Activated T-helper 1 cell treated with anti-CD3 and anti-CD28 coated beads, Interleukin-12 subunit alpha, Interleukin-12 subunit beta, Interleukin-2, Interleukin-4 antibody, amounts not matched to agents 30 ng/mL and 10 ng/mL and 1 ng/mL, durations not matched to agents 14 hours and 24 hours and 36 hours (primary cell): ENCODE measurements at regions of chr4 and their contacts with region 1.

Region 1: GRCh38 chr4:53196882-53197771 is 168.7 kb downstream of the SCFD2 start:
- DNase-seq: no peak
- H3K4me3 Mint-ChIP-seq: no peak overlapping the region
- H3K27ac Mint-ChIP-seq: no peak overlapping the region
- H3K4me1 Mint-ChIP-seq: peaks cover 4% of the 10 kb centered on the region
- H3K27me3 Mint-ChIP-seq: no peaks in the 10 kb centered on the region

Region 2: DNA sequence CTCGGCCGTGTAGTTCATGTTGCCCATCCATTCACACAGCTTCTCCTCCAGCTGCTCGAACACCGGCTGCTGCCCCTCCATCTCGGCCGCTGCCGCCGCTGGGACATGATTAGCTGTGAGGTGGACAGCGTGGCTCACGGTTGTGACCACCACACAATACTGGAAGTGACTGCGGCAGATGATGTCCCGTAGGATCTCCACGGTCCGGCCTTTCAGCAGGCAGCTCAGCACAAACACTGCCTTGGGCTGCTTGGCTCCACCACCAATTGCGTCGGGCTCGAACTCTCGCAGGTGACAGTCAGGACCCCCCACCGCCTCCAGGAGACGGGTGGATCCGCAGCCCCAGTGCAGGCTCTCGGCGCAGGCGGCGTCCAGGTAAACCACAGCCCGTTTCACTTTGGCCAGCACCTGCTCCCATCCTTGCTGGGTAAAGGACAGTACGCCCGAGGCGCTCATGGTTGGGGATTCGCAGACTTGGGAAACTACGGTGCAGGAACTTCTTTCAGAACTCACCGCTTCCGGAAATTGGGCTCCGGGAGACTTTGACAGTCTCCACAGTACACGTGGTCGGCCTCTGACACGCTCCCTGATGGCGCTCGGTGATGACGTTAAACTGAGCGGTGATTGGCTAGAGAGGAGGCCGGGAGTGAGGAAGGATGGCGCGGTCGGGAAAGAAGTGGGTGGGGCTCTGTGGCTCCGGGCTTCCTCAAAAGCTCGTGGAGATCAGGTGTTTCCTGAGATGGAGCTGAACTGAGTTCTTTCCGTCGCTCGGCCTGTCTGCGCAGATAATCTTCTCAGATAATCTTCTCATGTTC is 168.6 kb after region 1 on chr4 and contains the start of gene SCFD2:
- intact Hi-C with region 1: loop called (anchors 1 kb)
- DNase-seq: peak; percentile 95
- H3K4me3 Mint-ChIP-seq: peak within 1 kb of the TSS; percentile 98
- H3K27ac Mint-ChIP-seq: peak within 1 kb of the TSS; percentile 88
- H3K4me1 Mint-ChIP-seq: peaks cover 39% of the 10 kb centered on the region
- H3K27me3 Mint-ChIP-seq: peaks cover 5% of the 10 kb centered on the region
- total RNA-seq, gene SCFD2: 39.4 and 40.5 TPM in 2 replicates

Region 3: DNA sequence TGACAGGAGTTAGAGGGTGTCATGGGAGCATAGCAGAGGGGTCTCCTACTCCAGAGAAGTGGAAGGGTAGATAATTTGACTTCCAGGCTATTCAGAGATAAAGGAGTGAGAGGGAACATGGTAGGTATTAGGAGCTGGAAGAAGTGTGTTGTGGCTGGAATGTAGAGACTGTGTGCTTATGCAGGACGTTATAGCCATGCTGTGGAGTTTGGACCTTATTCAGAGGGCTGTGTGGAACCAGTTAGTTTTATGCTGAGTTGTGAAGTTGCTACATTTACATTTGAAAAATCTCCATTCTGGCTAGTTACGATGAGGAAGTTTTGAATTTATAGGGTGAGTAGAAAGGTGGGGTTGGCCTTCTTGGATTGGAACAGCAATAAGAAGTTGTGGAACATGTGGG is 247.8 kb after region 1 on chr4:
- intact Hi-C with region 1: loop called (anchors 10 kb)
- DNase-seq: no peak
- H3K4me3 Mint-ChIP-seq: no peak overlapping the region
- H3K27ac Mint-ChIP-seq: no peak overlapping the region
- H3K4me1 Mint-ChIP-seq: no peaks in the 10 kb centered on the region
- H3K27me3 Mint-ChIP-seq: no peaks in the 10 kb centered on the region

Region 4: GRCh38 chr4:53908661-53909078 is 711.5 kb after region 1 on chr4:
- intact Hi-C with region 1: loop called (anchors 5 kb)
- DNase-seq: no peak
- H3K4me3 Mint-ChIP-seq: no peak overlapping the region
- H3K27ac Mint-ChIP-seq: no peak overlapping the region
- H3K4me1 Mint-ChIP-seq: peaks cover 17% of the 10 kb centered on the region
- H3K27me3 Mint-ChIP-seq: peaks cover 30% of the 10 kb centered on the region

Region 5: DNA sequence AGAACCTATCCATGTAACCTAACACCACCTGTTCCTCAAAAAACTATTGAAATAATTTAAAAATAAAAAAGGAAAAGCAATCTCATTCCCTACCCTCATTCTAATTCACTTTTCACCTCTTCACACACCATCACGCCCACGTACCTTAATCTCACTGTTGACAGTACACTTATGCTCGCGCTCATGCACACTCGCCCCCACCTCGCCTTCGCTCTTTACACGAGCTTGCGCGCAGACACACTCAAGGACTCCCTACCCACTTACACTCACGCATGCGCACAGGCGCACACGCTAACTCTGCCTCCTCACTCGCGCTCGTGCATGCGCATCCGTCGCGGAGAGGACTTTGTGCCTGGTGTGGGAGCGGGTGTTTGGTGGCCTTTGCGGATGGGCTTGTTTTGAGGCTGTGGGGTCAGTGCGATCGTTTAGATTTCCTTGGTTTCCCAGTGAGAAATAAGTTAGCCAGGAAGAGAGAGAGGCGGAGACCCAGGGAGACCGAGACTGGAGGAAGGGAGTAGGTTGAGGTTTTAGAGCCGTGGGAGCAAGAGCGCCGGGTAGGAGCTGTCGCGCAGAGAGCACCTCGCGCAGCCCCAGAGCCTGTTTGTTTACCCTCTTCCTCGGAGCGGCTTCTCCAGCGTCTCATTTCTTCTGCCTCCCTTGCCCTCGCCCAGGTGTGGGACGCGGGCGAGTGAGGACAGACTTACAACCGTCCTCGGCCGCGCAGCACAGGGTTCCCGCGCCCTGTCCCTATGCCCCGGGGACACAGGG is 894.7 kb after region 1 on chr4:
- intact Hi-C with region 1: loop called (anchors 10 kb)
- DNase-seq: peak; percentile 71
- H3K4me3 Mint-ChIP-seq: peak overlapping the region; percentile 82
- H3K27ac Mint-ChIP-seq: peak overlapping the region; percentile 30
- H3K4me1 Mint-ChIP-seq: peaks cover 30% of the 10 kb centered on the region
- H3K27me3 Mint-ChIP-seq: peaks cover 74% of the 10 kb centered on the region

Region 6: DNA sequence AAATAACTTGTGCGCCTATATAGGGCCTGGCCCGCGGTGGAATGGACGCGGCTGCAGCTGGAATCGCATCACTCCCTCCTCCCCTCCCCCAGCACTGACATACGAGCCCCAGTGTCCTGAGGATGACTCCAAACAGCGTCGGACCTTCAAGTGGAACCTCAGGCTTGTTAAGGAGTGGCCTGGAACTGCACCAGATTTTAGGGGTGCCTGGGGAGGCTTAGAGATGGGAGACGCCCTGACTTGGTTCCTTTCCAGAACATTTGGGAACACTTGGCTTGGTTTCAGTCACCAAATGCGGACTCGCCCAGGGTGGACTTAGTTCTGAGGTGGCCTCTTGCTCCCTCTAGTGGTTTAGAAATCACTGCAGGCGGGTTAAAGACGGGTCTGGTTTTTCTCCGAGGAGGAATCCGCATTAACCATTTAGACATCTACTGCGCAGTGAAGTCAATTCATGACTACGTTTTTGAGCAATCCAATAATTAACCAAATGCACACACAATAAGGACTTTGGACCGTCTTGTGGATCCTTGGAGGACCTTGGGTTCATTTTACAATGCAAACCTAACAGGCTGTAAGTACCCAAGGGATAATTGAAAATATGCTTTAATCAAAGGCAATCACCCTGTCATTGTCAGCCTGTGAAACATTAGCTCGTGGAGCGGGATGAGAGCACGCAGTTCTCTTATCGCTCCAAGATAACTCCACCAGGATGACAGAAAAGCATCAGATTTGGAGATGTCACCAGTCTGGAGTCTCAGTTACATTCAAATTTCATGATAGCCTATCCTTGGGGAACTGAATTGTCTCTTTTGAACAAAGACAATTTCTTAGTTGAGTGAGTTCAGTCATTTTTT is 1020.7 kb after region 1 on chr4:
- intact Hi-C with region 1: loop called (anchors 1 kb)
- DNase-seq: peak; percentile 19
- H3K4me3 Mint-ChIP-seq: no peak overlapping the region
- H3K27ac Mint-ChIP-seq: no peak overlapping the region
- H3K4me1 Mint-ChIP-seq: peaks cover 4% of the 10 kb centered on the region
- H3K27me3 Mint-ChIP-seq: peaks cover 23% of the 10 kb centered on the region